Endothelial cell of umbilical vein (primary cell): ENCODE measurements at regions of chr1 and their contacts with region 1.

Region 1: DNA sequence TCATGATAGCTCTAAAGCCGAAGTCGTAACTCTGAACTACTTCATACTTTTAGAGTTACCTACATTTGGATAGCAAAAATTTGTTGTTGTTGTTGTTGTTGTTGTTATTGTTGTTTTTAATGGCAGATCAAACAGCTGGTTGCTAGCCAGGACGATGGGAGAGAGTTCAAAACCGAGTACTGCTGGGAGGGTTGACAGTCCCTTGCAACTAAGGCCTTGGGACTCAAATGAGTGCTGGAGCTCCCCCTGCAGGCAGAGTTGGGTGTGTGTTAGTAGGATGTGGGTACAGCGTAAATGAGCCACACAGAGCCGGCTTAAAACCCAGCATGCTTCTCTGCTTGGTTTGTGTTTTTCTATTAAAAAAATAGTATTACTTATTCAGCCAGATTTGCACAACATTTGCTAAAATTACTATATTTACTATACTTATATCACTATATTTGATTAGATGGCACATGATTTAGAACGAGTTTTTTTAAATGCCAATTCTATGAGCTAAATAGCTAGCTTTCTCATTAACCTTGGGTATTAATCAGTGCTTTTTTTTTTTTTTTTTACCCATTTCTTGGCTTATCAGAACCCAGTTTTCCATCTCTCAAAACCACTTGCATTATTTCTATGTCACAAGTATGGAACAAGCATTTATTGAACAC is 129.2 kb upstream of the SYT6 start:
- DNase-seq: peak; percentile 74
- H3K4me3 ChIP-seq: no peak overlapping the region
- H3K27ac ChIP-seq: no peak overlapping the region
- H3K4me1 ChIP-seq: no peaks in the 10 kb centered on the region
- H3K27me3 ChIP-seq: peaks cover 2 to 6% of the 10 kb centered on the region in 2 experiments
- CTCF ChIP-seq: peak; percentile 77 to 90
- POLR2A ChIP-seq: no peak

Region 2: DNA sequence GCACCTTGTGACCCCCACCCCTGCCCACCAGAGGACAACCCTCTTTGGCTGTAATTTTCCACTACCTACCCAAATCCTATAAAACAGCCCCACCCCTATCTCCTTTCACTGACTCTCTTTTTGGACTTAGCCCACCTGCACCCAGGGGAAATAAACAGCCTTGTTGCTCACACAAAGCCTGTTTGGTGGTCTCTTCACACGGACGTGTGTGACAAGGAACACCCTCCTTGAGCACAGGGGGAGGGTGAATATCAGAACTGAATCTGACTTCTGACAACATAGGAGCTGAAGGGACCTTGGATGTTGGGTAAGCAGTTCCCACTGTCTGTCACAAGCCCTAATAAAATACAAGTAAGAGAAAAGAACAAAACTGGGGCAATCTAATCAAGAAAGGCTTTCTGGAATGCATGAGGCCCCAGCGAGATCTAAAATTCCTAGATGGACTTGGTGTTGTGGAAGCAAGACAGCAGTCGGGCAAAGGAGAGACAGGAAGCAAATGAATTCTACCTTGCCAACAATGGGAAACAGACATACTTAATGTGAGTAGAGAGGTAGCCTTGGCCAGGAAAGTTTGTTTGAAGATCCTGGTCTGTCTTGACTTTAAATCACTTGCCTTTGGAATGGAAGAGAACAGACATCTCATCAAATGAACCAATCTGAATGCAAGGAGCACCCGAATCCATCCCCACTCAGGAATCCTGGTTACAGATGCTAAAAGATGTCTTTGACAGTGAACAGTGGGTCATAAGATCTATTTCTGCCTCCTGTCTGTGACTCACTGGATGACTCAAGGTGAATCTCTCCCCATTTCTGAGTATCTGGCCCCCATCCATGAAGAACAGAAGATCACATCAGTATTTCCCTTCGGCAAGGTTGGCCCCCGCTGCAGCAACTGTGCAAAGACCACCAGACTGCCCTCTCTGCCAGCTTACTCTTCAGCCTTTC is 250.3 kb before region 1 on chr1:
- CTCF ChIA-PET with region 1: interaction called, 9 read pairs
- POLR2A ChIA-PET with region 1: no interaction called
- dilution Hi-C with region 1: no loop called
- intact Hi-C with region 1: loop called (anchors 1 kb)
- DNase-seq: no peak
- H3K4me3 ChIP-seq: no peak overlapping the region
- H3K27ac ChIP-seq: no peak overlapping the region
- H3K4me1 ChIP-seq: no peaks in the 10 kb centered on the region
- H3K27me3 ChIP-seq: peaks cover 0 to 2% of the 10 kb centered on the region in 2 experiments
- CTCF ChIP-seq: no peak
- POLR2A ChIP-seq: no peak

Region 3: GRCh38 chr1:114263343-114263742 is 19.5 kb before region 1 on chr1:
- CTCF ChIA-PET with region 1: interaction called, 80 read pairs
- POLR2A ChIA-PET with region 1: no interaction called
- dilution Hi-C with region 1: no loop called
- intact Hi-C with region 1: no loop called
- DNase-seq: no peak
- H3K4me3 ChIP-seq: no peak overlapping the region
- H3K27ac ChIP-seq: no peak overlapping the region
- H3K4me1 ChIP-seq: no peaks in the 10 kb centered on the region
- H3K27me3 ChIP-seq: peaks cover 0 to 3% of the 10 kb centered on the region in 2 experiments
- CTCF ChIP-seq: no peak
- POLR2A ChIP-seq: no peak

Region 4: DNA sequence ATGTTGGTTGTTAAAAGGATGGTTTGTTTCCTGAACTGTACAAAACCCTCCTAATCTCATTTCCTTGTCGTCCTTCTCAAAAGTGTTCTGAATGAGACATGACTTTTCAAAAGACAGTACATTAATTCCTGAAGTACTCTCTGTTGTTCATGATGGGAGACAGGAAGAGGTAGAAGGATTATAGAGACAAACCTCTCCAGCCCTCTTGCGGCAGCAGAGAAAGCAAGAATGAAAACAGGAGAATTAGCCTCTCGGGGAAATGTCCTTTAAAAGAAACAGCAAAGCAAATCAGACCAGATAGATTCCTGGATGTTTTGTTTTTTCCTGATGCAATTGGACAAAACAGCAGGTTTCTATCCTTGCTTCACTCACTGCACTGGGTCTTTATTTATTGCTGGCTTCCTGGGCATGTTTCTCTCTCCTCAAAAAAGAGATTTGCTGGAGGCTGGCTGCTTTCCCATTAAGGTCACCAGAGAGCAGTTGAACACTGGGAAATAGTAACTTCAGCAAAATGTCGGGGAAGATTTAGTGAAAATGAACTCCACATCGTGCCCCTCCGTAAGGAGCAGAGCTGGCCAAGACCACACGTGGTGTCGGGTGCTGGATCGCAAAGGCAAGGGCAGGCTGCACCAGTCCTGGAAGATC is 16.6 kb after region 1 on chr1:
- CTCF ChIA-PET with region 1: interaction called, 10 read pairs
- POLR2A ChIA-PET with region 1: no interaction called
- dilution Hi-C with region 1: no loop called
- intact Hi-C with region 1: no loop called
- DNase-seq: no peak
- H3K4me3 ChIP-seq: no peak overlapping the region
- H3K27ac ChIP-seq: no peak overlapping the region
- H3K4me1 ChIP-seq: no peaks in the 10 kb centered on the region
- H3K27me3 ChIP-seq: peaks cover 5% of the 10 kb centered on the region in 2 experiments
- CTCF ChIP-seq: no peak
- POLR2A ChIP-seq: no peak